Left lung (tissue), 14 donors: ENCODE measurements at regions of chr1 and their contacts with region 1.

Region 1: DNA sequence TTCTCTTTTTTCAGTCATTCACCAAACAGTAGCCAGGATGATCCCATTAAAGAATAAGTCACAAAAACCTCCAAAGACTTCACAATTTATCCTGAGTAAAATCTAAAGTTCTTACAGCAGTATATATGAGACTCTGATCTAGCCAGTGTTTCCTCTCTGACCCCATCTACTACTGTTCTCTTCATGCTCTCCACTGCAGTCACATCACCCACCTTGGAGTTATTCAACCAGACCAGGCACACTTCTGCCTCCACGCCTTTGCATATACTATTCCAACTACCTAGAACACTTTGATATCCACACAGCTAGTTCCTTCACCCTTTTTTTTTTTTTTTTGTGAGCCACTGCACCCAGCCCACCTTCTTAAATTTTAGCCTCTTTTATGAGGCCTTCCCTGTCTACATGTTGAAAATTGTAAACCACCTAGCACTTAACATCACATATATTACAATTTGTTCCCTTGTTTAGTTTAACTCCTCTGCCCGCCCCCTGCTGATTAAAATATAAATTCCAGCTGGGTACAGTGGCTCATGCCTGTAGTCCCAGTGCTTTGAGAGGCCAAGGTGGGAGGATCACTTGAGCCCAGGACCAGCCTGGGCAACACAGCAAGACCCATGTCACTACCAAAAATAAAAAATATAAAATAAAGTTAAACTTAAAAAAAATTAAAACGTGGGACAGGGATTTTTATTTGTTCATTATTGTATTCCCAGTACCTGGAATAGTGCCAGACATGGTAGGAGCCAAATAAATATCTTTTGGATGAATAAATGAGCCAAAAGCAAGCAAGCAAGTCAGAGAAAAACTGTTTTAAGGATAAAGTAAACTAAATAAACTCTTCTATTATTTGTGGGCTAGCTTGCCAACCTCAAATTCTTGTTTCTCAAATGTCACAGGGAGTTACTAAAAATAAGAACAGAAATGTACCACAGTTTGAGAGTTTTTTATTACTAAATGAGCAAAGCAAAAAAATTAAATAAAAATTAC is 35.2 kb upstream of the MUTYH start:
- DNase-seq: peak in 2 of 4 donors; percentile 31 to 50
- ATAC-seq: no peak
- H3K4me3 ChIP-seq: no peak overlapping the region
- H3K27ac ChIP-seq: no peak overlapping the region
- H3K4me1 ChIP-seq: peaks cover 0 to 3% of the 10 kb centered on the region in 2 donors
- H3K27me3 ChIP-seq: no peaks in the 10 kb centered on the region
- CTCF ChIP-seq: no peak

Region 2: GRCh38 chr1:45429561-45430159 is 54.3 kb after region 1 on chr1:
- intact Hi-C with region 1: loop called in 1 of 2 experiments (anchors 10 kb)
- DNase-seq: no peak
- ATAC-seq: no peak
- H3K4me3 ChIP-seq: no peak overlapping the region
- H3K27ac ChIP-seq: no peak overlapping the region
- H3K4me1 ChIP-seq: peaks cover 0 to 9% of the 10 kb centered on the region in 2 donors
- H3K27me3 ChIP-seq: no peaks in the 10 kb centered on the region
- CTCF ChIP-seq: no peak

Region 3: DNA sequence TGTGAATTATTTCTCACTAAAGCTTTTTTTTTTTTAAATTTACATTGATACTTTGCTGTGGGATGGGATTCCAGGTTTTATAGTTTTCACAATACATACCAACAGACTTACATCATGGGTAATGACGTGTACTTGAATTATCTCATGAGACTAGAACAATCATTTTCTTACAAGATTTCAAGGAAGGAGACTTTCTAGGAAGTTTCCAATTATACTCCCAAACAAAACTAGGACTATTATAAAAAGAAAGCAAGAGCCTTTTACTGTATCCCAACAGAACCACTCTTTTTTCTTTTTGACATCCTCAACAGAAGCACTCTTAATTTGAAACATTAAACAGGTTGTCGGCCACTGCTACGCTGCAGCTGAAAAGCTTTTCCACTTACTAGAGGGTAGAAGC is 66.9 kb after region 1 on chr1:
- intact Hi-C with region 1: no loop called
- DNase-seq: peak in 1 of 4 donors; percentile 6
- ATAC-seq: no peak
- H3K4me3 ChIP-seq: no peak overlapping the region
- H3K27ac ChIP-seq: no peak overlapping the region
- H3K4me1 ChIP-seq: no peaks in the 10 kb centered on the region
- H3K27me3 ChIP-seq: no peaks in the 10 kb centered on the region
- CTCF ChIP-seq: no peak

Region 4: GRCh38 chr1:45490626-45491486 is 115.5 kb after region 1 on chr1 and contains the start of gene TESK2:
- intact Hi-C with region 1: no loop called
- DNase-seq: peak; percentile 96 to 99 (median 98)
- ATAC-seq: peak; percentile 98
- H3K4me3 ChIP-seq: peak within 1 kb of the TSS; percentile 77 to 90
- H3K27ac ChIP-seq: peak within 1 kb of the TSS; percentile 76 to 81
- H3K4me1 ChIP-seq: peaks cover 5 to 24% of the 10 kb centered on the region in 2 donors
- H3K27me3 ChIP-seq: no peaks in the 10 kb centered on the region
- CTCF ChIP-seq: peak; percentile 15 to 50
- polyA plus RNA-seq, gene TESK2: 8.5 to 12.5 (median 10.2) TPM